Sigmoid colon (tissue), 7 donors: ENCODE measurements at regions of chr3 and their contacts with region 1.

Region 1: GRCh38 chr3:105868742-105869530 is at the start of gene CBLB:
- DNase-seq: peak; percentile 97
- H3K4me3 ChIP-seq: peak within 1 kb of the TSS; percentile 76 to 97 (median 97)
- H3K27ac ChIP-seq: peak within 1 kb of the TSS; percentile 94 to 99 (median 98)
- H3K4me1 ChIP-seq: peaks cover 0 to 48% (median 33%) of the 10 kb centered on the region in 4 donors
- H3K27me3 ChIP-seq: no peaks in the 10 kb centered on the region
- CTCF ChIP-seq: no peak
- EP300 ChIP-seq: no peak
- POLR2A ChIP-seq: peak; percentile 74 to 81
- total RNA-seq, gene CBLB: 27.4 to 55.9 (median 48.3) TPM

Region 2: GRCh38 chr3:106345353-106346027 is 476.6 kb after region 1 on chr3:
- intact Hi-C with region 1: loop called (anchors 5 kb)
- DNase-seq: no peak
- H3K4me3 ChIP-seq: no peak overlapping the region
- H3K27ac ChIP-seq: peak overlapping the region in 3 of 4 donors; percentile 39 to 63 (median 53)
- H3K4me1 ChIP-seq: peaks cover 0 to 36% (median 25%) of the 10 kb centered on the region in 4 donors
- H3K27me3 ChIP-seq: no peaks in the 10 kb centered on the region
- CTCF ChIP-seq: no peak
- EP300 ChIP-seq: peak in 3 of 4 donors; percentile 15 to 56 (median 35)
- POLR2A ChIP-seq: no peak